T-cell (primary cell): ENCODE measurements at regions of chr6 and their contacts with region 1.

Region 1: GRCh38 chr6:11192167-11192566 is 40.3 kb downstream of the NEDD9 start:
- DNase-seq: no peak
- ATAC-seq: no peak
- H3K4me3 ChIP-seq: no peak overlapping the region
- H3K4me3 Mint-ChIP-seq: no peak overlapping the region
- H3K27ac ChIP-seq: no peak overlapping the region
- H3K27ac Mint-ChIP-seq: no peak overlapping the region
- H3K4me1 ChIP-seq: peaks cover 0 to 3% of the 10 kb centered on the region in 2 experiments
- H3K4me1 Mint-ChIP-seq: peaks cover 0 to 5% (median 5%) of the 10 kb centered on the region in 3 donors
- H3K27me3 ChIP-seq: no peaks in the 10 kb centered on the region
- H3K27me3 Mint-ChIP-seq: no peaks in the 10 kb centered on the region

Region 2: DNA sequence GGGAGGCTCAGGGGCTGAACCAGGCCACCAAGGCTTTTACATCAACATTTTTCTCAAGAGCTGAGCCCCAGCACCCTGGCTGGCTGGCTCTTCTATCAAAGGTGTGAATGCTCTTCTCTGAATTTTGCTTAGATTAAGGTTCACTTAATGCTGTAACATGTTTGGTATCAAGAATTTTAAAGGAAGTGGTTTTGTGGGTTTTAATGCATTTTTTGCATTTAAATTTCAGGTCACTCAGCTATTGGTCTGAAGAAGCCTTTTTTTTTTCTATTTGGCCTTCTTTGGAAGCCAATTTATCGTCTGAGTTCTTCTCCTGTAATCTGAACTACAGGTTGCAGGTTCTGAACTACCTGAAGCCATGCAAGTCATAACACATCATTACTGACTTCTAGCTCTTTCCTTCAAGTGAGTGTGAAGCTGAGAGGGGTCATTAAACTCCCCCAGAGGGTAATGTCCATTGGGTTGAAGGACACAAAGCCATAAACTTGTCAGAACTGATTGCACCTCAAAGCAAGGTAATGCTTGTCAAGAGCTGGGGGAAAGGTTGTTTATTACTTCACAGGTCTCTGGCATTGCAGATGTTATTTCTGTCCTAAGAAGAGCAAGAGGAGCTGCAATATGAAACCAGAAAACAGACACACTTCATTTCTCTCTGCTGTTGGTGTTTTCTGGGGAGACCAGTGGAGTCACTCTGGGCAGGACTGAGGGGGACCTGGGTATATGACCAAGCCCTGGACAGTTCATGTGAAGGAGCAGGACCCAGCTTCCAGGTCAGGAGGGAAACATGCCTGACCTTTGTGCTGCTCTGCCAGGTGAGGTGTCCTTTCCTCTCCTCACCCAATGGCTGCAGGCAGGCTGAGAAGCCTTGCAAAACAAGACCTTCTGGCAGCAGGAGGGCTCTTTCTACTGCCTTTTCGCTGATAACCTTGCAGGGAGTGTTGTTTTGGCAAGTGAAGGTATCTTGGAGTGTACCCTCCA is 66.4 kb after region 1 on chr6:
- CTCF ChIA-PET with region 1: no interaction called
- POLR2A ChIA-PET with region 1: interaction called in 1 of 2 experiments, 13 read pairs
- DNase-seq: peak in 30 of 35 experiments; percentile 2 to 64 (median 30)
- ATAC-seq: peak; percentile 75 to 89 (median 84)
- H3K4me3 ChIP-seq: no peak overlapping the region
- H3K4me3 Mint-ChIP-seq: peak overlapping the region in 1 of 3 donors; percentile 43
- H3K27ac ChIP-seq: peak overlapping the region; percentile 81
- H3K27ac Mint-ChIP-seq: peak overlapping the region; percentile 90 to 91
- H3K4me1 ChIP-seq: peaks cover 18 to 43% of the 10 kb centered on the region in 2 experiments
- H3K4me1 Mint-ChIP-seq: peaks cover 61 to 79% (median 62%) of the 10 kb centered on the region in 3 donors
- H3K27me3 ChIP-seq: no peaks in the 10 kb centered on the region
- H3K27me3 Mint-ChIP-seq: no peaks in the 10 kb centered on the region

Region 3: DNA sequence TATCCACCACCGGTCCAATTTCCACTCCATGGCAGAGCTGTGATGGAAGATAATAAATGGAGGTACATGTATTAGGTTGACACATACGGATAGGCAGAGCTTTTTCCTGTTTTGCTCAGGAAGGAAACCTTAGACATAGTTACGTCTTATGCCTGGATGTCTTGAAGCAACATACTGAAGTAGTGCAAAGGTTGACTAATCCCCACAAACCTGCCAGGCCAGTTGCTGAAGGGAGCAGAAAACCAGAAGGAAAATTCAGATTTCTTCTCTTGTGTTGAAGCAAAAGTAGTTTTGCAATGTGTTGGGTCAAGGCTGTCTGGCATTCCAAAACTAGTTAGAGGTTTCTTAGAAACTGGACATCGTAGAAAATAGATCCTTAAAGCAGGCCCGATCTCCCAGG is 1593.1 kb after region 1 on chr6:
- CTCF ChIA-PET with region 1: no interaction called
- POLR2A ChIA-PET with region 1: interaction called in 1 of 2 experiments, 11 read pairs
- DNase-seq: no peak
- ATAC-seq: no peak
- H3K4me3 ChIP-seq: no peak overlapping the region
- H3K4me3 Mint-ChIP-seq: no peak overlapping the region
- H3K27ac ChIP-seq: no peak overlapping the region
- H3K27ac Mint-ChIP-seq: no peak overlapping the region
- H3K4me1 ChIP-seq: no peaks in the 10 kb centered on the region
- H3K4me1 Mint-ChIP-seq: no peaks in the 10 kb centered on the region
- H3K27me3 ChIP-seq: no peaks in the 10 kb centered on the region
- H3K27me3 Mint-ChIP-seq: peaks cover 0 to 16% of the 10 kb centered on the region in 2 donors